ENCODE measurements at regions of chr7 and their contacts with region 1.

Region 1: GRCh38 chr7:106176414-106177299 is 64.5 kb upstream of the SYPL1 start:
- DNase-seq: peak; percentile 88
- H3K4me3 ChIP-seq: no peak overlapping the region
- H3K27ac ChIP-seq: no peak overlapping the region
- H3K4me1 ChIP-seq: peaks cover 4 to 7% of the 10 kb centered on the region in 2 experiments; a peak in 2 of 4 replicates
- H3K27me3 ChIP-seq: no peaks in the 10 kb centered on the region
- CTCF ChIP-seq: peak; percentile 99
- EP300 ChIP-seq: no peak
- RAD21 ChIP-seq: peak; percentile 100

Region 2: GRCh38 chr7:106187613-106188350 is 11.1 kb after region 1 on chr7:
- CTCF ChIA-PET with region 1: interaction called, 52 read pairs
- POLR2A ChIA-PET with region 1: no interaction called
- DNase-seq: no peak
- H3K4me3 ChIP-seq: no peak overlapping the region
- H3K27ac ChIP-seq: no peak overlapping the region
- H3K4me1 ChIP-seq: no peaks in the 10 kb centered on the region
- H3K27me3 ChIP-seq: no peaks in the 10 kb centered on the region
- CTCF ChIP-seq: no peak
- EP300 ChIP-seq: no peak
- RAD21 ChIP-seq: no peak

Region 3: GRCh38 chr7:106223156-106223555 is 46.5 kb after region 1 on chr7:
- CTCF ChIA-PET with region 1: interaction called, 22 read pairs
- POLR2A ChIA-PET with region 1: no interaction called
- DNase-seq: no peak
- H3K4me3 ChIP-seq: no peak overlapping the region
- H3K27ac ChIP-seq: no peak overlapping the region
- H3K4me1 ChIP-seq: peaks cover 0 to 3% of the 10 kb centered on the region in 2 experiments; a peak in 1 of 4 replicates
- H3K27me3 ChIP-seq: no peaks in the 10 kb centered on the region
- CTCF ChIP-seq: no peak
- EP300 ChIP-seq: no peak
- RAD21 ChIP-seq: no peak

Region 4: GRCh38 chr7:106376026-106376799 is 199.6 kb after region 1 on chr7:
- CTCF ChIA-PET with region 1: interaction called, 10 read pairs
- POLR2A ChIA-PET with region 1: no interaction called
- DNase-seq: peak; percentile 16
- H3K4me3 ChIP-seq: no peak overlapping the region
- H3K27ac ChIP-seq: no peak overlapping the region
- H3K4me1 ChIP-seq: peaks cover 0 to 3% of the 10 kb centered on the region in 2 experiments; a peak in 1 of 4 replicates
- H3K27me3 ChIP-seq: no peaks in the 10 kb centered on the region
- CTCF ChIP-seq: no peak
- EP300 ChIP-seq: 0 out of 4 replicates have a peak, but pooled peaks of 1 of the 2 experiments have one; percentile 19
- RAD21 ChIP-seq: no peak

Region 5: DNA sequence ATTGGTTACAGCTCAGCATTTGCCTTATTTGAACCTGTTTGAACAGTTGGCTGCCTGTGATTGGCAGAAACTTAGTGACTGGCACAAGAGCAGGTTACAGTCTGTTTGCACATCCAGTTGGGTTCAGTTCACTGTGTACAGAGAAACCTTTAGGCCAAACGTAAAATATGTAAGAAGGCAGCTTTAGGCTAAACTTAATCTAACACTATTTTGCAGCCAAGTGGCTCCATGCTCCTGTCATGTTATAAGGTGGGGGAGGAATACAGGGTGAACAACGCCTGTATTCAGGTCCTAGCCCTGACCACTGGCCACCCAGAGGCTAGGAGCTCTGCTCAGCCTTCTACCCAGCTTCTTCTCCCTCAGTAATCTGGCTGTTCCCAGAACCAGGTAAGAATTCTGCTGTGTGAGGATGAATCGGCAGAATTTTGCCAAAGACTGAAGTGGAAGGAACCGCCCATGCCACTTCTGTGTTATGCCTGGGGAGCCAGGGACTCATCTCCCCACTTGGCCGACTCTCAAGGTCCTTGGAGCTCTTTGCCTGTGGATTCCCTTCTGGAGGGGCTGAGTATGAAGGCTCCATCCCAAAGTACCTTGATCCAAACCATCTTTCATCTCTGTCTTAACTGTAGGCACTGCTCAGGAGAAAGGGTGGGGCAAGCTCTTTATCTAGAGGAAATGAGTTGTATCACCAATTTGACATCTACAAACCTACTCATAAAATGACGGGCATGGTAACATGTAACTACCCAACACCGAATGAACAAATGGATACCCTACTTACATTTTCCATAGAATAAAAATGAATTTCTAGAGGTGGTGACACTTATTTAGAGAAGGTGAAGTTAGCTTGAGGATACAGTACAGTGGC is 272.6 kb after region 1 on chr7:
- CTCF ChIA-PET with region 1: interaction called, 20 read pairs
- POLR2A ChIA-PET with region 1: no interaction called
- DNase-seq: no peak
- H3K4me3 ChIP-seq: no peak overlapping the region
- H3K27ac ChIP-seq: no peak overlapping the region
- H3K4me1 ChIP-seq: no peaks in the 10 kb centered on the region
- H3K27me3 ChIP-seq: no peaks in the 10 kb centered on the region
- CTCF ChIP-seq: no peak
- EP300 ChIP-seq: no peak
- RAD21 ChIP-seq: no peak

Region 6: DNA sequence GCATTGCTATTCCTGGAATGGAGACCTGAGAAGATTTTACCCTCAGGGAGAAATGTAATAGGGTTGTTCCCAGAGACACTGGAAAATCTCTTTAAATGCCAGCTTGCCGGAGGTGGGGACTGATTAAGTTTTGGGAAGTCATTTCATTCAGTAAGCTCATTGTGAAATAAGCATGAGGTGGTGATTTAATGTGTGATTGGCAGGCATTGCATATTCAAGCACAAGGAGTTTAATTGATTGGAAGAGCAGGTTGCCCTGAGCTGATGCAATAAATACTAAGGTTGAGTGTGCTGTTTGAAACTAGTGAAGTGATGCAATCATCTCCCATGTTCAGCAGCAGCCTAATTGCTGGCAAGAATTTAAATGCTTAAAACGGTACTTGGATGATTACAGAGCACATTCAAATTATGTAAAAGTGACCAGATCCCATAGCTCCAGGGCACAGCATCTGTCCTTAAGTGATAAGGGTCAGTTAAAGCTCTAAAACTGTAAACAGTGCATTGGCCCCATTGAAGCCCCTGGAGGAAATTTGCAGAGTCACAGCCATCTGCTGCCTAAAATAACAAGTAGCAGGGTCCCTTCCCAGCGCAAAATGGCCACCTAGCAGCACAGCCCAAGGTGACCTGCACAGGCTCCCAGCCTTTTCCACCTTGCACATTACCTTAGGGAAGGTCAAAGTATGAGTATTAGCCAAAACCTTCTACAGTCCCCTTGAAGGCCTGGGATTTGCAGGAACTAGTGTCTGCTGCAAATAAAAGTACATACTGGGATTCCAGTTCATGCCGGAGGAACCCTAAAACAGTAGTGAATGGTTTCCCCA is 392.2 kb after region 1 on chr7:
- CTCF ChIA-PET with region 1: interaction called, 12 read pairs
- POLR2A ChIA-PET with region 1: no interaction called
- DNase-seq: peak; percentile 80
- H3K4me3 ChIP-seq: no peak overlapping the region; a peak in 1 of 4 replicates
- H3K27ac ChIP-seq: peak overlapping the region in 1 of 2 experiments; percentile 98; a peak in 2 of 4 replicates
- H3K4me1 ChIP-seq: peaks cover 10 to 37% of the 10 kb centered on the region in 2 experiments; a peak in 3 of 4 replicates
- H3K27me3 ChIP-seq: no peaks in the 10 kb centered on the region
- CTCF ChIP-seq: no peak
- EP300 ChIP-seq: peak; percentile 7 to 94; a peak in 2 of 4 replicates
- RAD21 ChIP-seq: peak; percentile 49

Region 7: GRCh38 chr7:107150375-107151073 is 973.9 kb after region 1 on chr7:
- CTCF ChIA-PET with region 1: interaction called, 36 read pairs
- POLR2A ChIA-PET with region 1: no interaction called
- DNase-seq: peak; percentile 49
- H3K4me3 ChIP-seq: no peak overlapping the region
- H3K27ac ChIP-seq: no peak overlapping the region
- H3K4me1 ChIP-seq: peaks cover 0 to 6% of the 10 kb centered on the region in 2 experiments; a peak in 2 of 4 replicates
- H3K27me3 ChIP-seq: no peaks in the 10 kb centered on the region
- CTCF ChIP-seq: peak; percentile 91
- EP300 ChIP-seq: no peak
- RAD21 ChIP-seq: peak; percentile 91

Measured in SK-N-SH (cell line).